ENCODE measurements at regions of chr1 and their contacts with region 1.

Region 1: DNA sequence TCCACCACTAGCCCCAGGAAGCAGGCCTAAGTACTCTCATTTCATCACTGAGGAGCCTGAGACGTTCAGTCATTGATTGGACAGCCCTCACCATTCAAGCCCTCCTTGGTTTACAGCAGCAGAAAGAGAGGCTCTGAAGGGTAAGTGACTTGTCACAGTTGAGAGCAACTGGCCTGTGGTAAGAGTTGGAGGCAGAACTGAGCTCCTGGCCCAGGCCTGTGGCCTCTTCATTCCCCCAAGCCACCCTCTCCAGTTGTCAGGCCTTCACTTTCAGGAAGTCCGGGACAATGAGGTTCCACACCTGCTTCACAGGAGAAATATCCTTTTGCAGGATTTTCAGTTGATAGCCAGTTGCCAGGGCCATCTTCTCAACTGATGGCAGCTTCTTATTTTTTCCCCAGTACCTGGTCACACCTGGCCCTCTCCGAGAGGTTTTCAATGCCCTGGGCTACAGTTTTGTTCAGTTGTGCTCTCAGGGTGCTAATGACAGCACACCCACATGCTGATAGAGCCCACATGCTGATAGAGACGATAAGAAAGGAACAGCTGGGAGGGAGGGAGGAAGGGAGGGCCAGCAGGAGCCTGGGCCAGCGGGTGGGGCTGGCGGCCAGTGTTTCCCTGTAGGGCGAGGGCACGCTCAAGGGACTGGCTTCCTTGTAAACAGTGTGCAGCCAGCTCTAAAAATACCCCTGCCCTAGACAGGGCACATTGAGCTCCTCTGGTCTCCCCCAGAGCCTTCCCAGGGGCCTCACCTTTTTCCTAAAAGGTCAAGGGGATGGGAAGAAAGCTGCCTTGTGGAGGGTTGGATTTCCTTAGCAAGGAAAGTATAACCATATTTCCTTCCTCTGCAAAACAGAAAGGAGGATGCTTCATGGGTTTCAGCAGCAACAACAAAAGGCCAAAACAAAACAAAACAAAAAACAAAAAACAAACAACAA is 112.7 kb upstream of the JUN start:
- DNase-seq: peak; percentile 57
- H3K4me3 ChIP-seq: no peak overlapping the region
- H3K27ac ChIP-seq: peak overlapping the region; percentile 18 to 52
- H3K4me1 ChIP-seq: peaks cover 12% of the 10 kb centered on the region
- H3K27me3 ChIP-seq: no peaks in the 10 kb centered on the region
- CTCF ChIP-seq: no peak
- POLR2A ChIP-seq: no peak

Region 2: GRCh38 chr1:58816072-58816746 is 80.3 kb before region 1 on chr1:
- intact Hi-C with region 1: loop called (anchors 2 kb)
- DNase-seq: peak; percentile 88
- H3K4me3 ChIP-seq: peak overlapping the region; percentile 49 to 59
- H3K27ac ChIP-seq: peak overlapping the region; percentile 90 to 93
- H3K4me1 ChIP-seq: peaks cover 19% of the 10 kb centered on the region
- H3K27me3 ChIP-seq: no peaks in the 10 kb centered on the region
- CTCF ChIP-seq: peak in 2 of 4 experiments; percentile 23 to 31
- POLR2A ChIP-seq: peak; percentile 37

Region 3: GRCh38 chr1:59699227-59699847 is 802.8 kb after region 1 on chr1:
- intact Hi-C with region 1: loop called (anchors 5 kb)
- DNase-seq: no peak
- H3K4me3 ChIP-seq: no peak overlapping the region
- H3K27ac ChIP-seq: peak overlapping the region; percentile 58 to 64
- H3K4me1 ChIP-seq: no peaks in the 10 kb centered on the region
- H3K27me3 ChIP-seq: no peaks in the 10 kb centered on the region
- CTCF ChIP-seq: peak; percentile 90 to 94 (median 92)
- POLR2A ChIP-seq: no peak

Measured in prostate gland (tissue), 2 donors.